ENCODE measurements at regions of chr6 and their contacts with region 1.

Region 1: GRCh38 chr6:10383781-10384616 is 30.9 kb downstream of the TFAP2A start:
- DNase-seq: peak; percentile 27
- ATAC-seq: no peak
- H3K4me3 ChIP-seq: no peak overlapping the region
- H3K4me3 Mint-ChIP-seq: no peak overlapping the region
- H3K27ac ChIP-seq: no peak overlapping the region
- H3K27ac Mint-ChIP-seq: peak overlapping the region; percentile 12
- H3K4me1 ChIP-seq: peaks cover 0 to 14% of the 10 kb centered on the region in 2 donors
- H3K4me1 Mint-ChIP-seq: no peaks in the 10 kb centered on the region
- H3K27me3 ChIP-seq: peaks cover 0 to 79% (median 64%) of the 10 kb centered on the region in 4 experiments
- H3K27me3 Mint-ChIP-seq: peaks cover 58% of the 10 kb centered on the region
- CTCF ChIP-seq: no peak

Region 2: GRCh38 chr6:10404107-10404798 is 20.3 kb after region 1 on chr6:
- CTCF ChIA-PET with region 1: no interaction called
- POLR2A ChIA-PET with region 1: no interaction called
- intact Hi-C with region 1: loop called (anchors 2 kb)
- DNase-seq: peak; percentile 91
- ATAC-seq: peak; percentile 87
- H3K4me3 ChIP-seq: peak overlapping the region; percentile 43 to 66 (median 59)
- H3K4me3 Mint-ChIP-seq: peak overlapping the region; percentile 81
- H3K27ac ChIP-seq: peak overlapping the region; percentile 32 to 37
- H3K27ac Mint-ChIP-seq: peak overlapping the region; percentile 56
- H3K4me1 ChIP-seq: peaks cover 14 to 15% of the 10 kb centered on the region in 2 donors
- H3K4me1 Mint-ChIP-seq: peaks cover 13% of the 10 kb centered on the region
- H3K27me3 ChIP-seq: peaks cover 0 to 64% (median 62%) of the 10 kb centered on the region in 4 experiments
- H3K27me3 Mint-ChIP-seq: peaks cover 77% of the 10 kb centered on the region
- CTCF ChIP-seq: no peak

Region 3: DNA sequence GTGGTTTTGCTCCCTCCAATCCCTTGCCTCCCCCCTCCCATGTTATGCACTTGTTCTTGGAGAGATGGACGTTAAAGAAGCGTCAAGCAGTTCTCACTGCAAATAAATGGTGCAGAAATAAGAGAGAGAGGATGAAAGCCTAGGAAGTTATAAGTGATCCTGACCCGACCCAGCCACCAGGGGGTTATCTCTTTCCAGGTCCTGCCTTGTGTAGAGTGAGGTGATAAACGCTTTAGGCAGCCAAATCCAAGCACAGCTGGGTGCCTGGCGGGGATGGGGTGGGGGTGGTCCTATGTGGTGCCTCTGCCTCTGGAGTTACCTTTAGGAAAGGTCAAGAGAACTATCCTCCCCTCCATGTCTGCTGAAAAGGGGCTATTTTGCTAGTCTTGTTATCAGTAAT is 40.0 kb after region 1 on chr6:
- CTCF ChIA-PET with region 1: no interaction called
- POLR2A ChIA-PET with region 1: no interaction called
- intact Hi-C with region 1: loop called (anchors 5 kb)
- DNase-seq: no peak
- ATAC-seq: no peak
- H3K4me3 ChIP-seq: no peak overlapping the region
- H3K4me3 Mint-ChIP-seq: no peak overlapping the region
- H3K27ac ChIP-seq: no peak overlapping the region
- H3K27ac Mint-ChIP-seq: peak overlapping the region; percentile 26
- H3K4me1 ChIP-seq: peaks cover 22 to 53% of the 10 kb centered on the region in 2 donors
- H3K4me1 Mint-ChIP-seq: peaks cover 27% of the 10 kb centered on the region
- H3K27me3 ChIP-seq: peaks cover 2 to 88% (median 81%) of the 10 kb centered on the region in 4 experiments
- H3K27me3 Mint-ChIP-seq: peaks cover 73% of the 10 kb centered on the region
- CTCF ChIP-seq: no peak

Region 4: GRCh38 chr6:10621213-10621612 is 237.2 kb after region 1 on chr6:
- CTCF ChIA-PET with region 1: no interaction called
- POLR2A ChIA-PET with region 1: no interaction called
- intact Hi-C with region 1: no loop called
- DNase-seq: no peak
- ATAC-seq: no peak
- H3K4me3 ChIP-seq: no peak overlapping the region
- H3K4me3 Mint-ChIP-seq: no peak overlapping the region
- H3K27ac ChIP-seq: no peak overlapping the region
- H3K27ac Mint-ChIP-seq: no peak overlapping the region
- H3K4me1 ChIP-seq: no peaks in the 10 kb centered on the region
- H3K4me1 Mint-ChIP-seq: peaks cover 5% of the 10 kb centered on the region
- H3K27me3 ChIP-seq: no peaks in the 10 kb centered on the region
- H3K27me3 Mint-ChIP-seq: no peaks in the 10 kb centered on the region
- CTCF ChIP-seq: no peak